Activated naive CD4-positive, alpha-beta T cell treated with anti-CD3 and anti-CD28 coated beads for 36 hours (primary cell): ENCODE measurements at regions of chr12 and their contacts with region 1.

Region 1: DNA sequence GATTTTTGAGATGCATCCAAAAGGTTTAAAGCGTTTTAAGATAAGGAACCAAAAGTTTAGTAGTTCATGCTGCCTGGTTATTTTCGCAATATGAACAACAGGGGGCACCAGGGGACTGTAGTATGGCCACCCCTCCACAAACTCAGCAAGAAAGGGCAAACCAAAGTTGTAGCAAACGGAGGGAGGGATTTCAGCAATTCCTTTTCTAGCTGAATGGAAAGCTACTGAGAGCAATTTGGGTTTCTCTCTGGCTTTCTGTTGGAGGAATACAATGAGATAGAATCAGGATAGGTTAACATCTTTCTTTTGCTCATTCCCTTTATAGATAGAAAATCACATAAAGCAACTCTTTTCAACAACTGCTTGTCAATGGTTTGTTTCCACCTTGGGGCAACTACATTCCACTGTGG is 62.5 kb downstream of the DRAM1 start:
- DNase-seq: peak; percentile 73
- H3K4me3 Mint-ChIP-seq: no peak overlapping the region
- H3K27ac Mint-ChIP-seq: no peak overlapping the region
- H3K4me1 Mint-ChIP-seq: peaks cover 9% of the 10 kb centered on the region
- H3K27me3 Mint-ChIP-seq: peaks cover 18% of the 10 kb centered on the region

Region 2: DNA sequence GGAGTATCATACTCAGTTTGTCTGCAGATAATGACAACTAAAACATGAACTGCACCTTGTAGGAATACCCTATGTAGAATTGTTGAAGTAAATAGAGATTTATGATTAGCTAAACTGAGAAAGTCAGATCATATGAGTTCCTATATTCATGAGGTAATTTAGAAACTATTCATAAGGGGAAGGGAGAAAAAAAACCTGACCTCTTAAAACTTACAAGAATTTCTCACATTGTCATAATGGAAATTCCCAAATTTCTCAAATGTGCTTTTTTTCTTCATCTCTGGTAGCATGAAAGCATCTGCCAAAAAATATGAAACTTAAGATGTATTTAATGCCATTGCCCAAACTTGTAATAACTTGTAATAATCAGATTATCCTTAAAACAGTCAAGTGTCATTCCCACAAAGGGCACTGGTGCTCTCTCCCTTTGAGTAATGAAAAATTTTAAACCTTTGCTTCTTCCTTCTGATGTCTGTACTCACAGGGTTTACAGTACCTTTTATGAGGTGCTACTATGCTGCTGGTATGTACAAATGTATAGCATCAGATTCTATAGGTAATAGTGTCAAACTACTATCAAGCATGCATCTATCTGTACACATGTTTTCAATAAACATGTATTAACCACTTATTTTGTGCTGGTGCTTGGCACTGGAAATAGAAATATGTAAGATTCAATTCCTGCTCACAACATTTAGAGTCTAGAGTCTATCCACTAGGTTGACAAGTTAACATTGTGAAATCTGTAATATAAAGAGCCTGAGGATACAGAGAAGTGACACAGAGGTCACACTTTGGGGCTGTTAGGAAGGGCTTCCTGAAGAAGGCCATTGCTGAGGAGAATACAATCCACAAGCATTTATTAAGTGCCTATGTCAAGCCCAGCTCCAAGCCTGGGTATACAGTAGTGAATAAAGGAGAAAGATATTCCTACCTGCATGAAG is 79.9 kb before region 1 on chr12:
- CTCF ChIA-PET with region 1: no interaction called
- intact Hi-C with region 1: loop called (anchors 1 kb)
- DNase-seq: no peak
- H3K4me3 Mint-ChIP-seq: no peak overlapping the region
- H3K27ac Mint-ChIP-seq: peak overlapping the region; percentile 54
- H3K4me1 Mint-ChIP-seq: peaks cover 24% of the 10 kb centered on the region
- H3K27me3 Mint-ChIP-seq: peaks cover 2% of the 10 kb centered on the region

Region 3: DNA sequence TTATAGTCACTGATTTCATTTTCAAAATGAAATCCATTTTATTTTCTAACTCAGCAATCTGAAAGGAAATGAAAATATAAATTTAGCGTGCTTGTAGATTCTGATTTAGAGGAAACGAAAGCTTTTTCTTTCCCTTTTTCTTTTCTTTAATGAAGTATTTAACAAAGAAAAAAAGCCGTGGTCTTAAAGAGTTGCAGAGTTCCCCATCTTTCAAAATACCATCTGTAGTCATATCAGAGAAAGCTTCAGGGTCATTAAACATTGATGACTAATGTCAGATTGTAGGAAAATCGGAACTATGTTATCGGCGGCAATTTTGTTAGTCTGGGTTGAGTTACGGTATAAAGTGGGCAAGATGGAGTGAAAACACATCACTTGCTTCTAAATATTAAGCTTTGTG is 30.2 kb before region 1 on chr12:
- CTCF ChIA-PET with region 1: no interaction called
- intact Hi-C with region 1: no loop called
- DNase-seq: no peak
- H3K4me3 Mint-ChIP-seq: no peak overlapping the region
- H3K27ac Mint-ChIP-seq: no peak overlapping the region
- H3K4me1 Mint-ChIP-seq: peaks cover 2% of the 10 kb centered on the region
- H3K27me3 Mint-ChIP-seq: no peaks in the 10 kb centered on the region

Region 4: DNA sequence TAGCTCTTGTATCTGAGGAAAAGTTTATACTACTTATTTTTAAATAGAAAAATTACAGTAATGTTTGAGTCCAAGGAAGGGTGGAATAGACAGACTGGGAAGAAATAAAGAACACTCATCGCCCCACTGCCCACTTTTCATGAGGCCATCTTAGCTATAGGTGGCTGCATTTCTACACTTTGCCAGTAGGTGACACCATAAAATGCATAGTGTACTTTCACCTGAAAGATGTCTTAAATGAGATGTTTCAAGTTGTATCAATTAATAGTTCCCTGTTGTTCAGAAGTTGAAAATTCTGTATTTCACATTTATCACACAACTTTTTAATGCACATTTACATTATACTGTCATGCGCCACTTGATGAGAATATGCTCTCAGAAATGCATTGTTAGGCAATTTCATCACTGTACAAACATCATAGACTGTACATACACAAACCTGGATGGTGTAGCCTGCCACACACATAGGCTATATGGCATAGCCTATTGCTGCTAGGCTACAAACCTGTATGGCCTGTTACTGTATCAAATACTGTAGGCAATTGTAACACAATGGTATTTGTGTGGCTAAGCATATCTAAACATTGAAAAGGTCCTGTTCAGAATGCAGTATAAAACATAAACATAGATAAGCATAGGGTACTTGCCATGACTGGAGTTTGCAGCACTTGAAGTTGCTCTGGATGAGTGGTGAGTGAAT is 230.2 kb after region 1 on chr12:
- CTCF ChIA-PET with region 1: interaction called, 3 read pairs
- intact Hi-C with region 1: loop called (anchors 5 kb)
- DNase-seq: peak; percentile 30
- H3K4me3 Mint-ChIP-seq: no peak overlapping the region
- H3K27ac Mint-ChIP-seq: no peak overlapping the region
- H3K4me1 Mint-ChIP-seq: peaks cover 11% of the 10 kb centered on the region
- H3K27me3 Mint-ChIP-seq: no peaks in the 10 kb centered on the region

Region 5: DNA sequence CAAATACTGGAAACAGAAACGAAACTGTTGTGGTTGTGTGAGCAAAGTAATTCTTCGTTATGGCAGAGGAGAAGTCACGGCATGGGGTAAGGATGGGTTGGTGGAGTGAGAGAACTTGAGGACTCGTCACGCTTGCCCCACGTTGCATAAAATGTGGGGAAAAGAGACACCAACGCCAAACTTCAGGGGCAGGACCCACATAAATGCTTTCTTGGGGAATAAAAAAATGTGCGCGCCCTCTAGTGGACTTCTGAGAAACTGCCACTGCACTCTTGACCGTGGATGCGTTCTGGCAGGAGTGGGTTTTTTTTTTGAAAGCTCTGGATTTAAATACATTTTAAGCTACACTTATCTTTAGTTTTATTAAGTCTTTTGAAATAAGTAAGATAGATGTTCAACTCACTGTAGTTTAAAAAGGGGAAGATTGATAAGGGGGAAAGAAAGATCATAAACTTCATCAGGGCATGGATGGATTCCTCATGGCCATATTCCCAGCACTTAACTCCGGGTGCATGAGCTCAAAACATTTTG is 544.6 kb after region 1 on chr12:
- CTCF ChIA-PET with region 1: interaction called, 12 read pairs
- intact Hi-C with region 1: loop called (anchors 1 kb)
- DNase-seq: peak; percentile 70
- H3K4me3 Mint-ChIP-seq: peak overlapping the region; percentile 32
- H3K27ac Mint-ChIP-seq: peak overlapping the region; percentile 87
- H3K4me1 Mint-ChIP-seq: peaks cover 22% of the 10 kb centered on the region
- H3K27me3 Mint-ChIP-seq: peaks cover 7% of the 10 kb centered on the region

Region 6: DNA sequence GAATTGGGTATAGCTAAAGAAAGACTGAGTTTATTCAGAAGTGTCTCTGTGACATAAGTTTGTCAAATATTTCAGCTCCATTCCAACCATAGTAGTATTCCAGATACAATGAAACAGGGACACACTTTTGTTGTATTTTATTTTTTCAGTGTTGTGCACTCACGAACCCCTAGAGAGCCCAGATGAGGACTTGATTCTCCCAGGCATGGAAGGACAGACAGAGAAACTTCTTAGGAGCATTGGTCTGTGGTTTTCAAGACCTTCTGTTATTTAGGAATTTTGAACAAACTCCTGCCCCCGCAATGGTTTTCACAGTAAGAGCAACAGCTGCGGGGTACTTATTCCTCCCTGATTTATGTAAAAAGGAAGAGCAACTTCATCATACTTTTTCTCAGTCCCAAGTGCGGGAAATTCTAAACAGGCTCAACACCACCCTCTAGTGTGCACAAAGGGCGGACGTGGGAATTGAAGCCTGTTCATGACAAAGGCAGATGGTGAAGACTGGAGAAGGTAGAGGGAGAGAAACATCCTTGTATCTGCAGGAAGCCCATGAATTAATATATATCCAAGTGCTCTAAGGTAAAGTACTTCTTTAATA is 829.6 kb after region 1 on chr12:
- CTCF ChIA-PET with region 1: interaction called, 5 read pairs
- intact Hi-C with region 1: loop called (anchors 1 kb)
- DNase-seq: peak; percentile 59
- H3K4me3 Mint-ChIP-seq: no peak overlapping the region
- H3K27ac Mint-ChIP-seq: no peak overlapping the region
- H3K4me1 Mint-ChIP-seq: no peaks in the 10 kb centered on the region
- H3K27me3 Mint-ChIP-seq: peaks cover 2% of the 10 kb centered on the region

Region 7: GRCh38 chr12:103548622-103549601 is 1609.1 kb after region 1 on chr12:
- CTCF ChIA-PET with region 1: interaction called, 3 read pairs
- intact Hi-C with region 1: loop called (anchors 1 kb)
- DNase-seq: peak; percentile 86
- H3K4me3 Mint-ChIP-seq: no peak overlapping the region
- H3K27ac Mint-ChIP-seq: no peak overlapping the region
- H3K4me1 Mint-ChIP-seq: peaks cover 2% of the 10 kb centered on the region
- H3K27me3 Mint-ChIP-seq: peaks cover 23% of the 10 kb centered on the region